ENCODE measurements at regions of chr17 and their contacts with region 1.

Region 1: GRCh38 chr17:59619293-59620063 is at the start of gene CLTC:
- DNase-seq: peak; percentile 83 to 98 (median 90)
- ATAC-seq: peak; percentile 82
- H3K4me3 ChIP-seq: peak within 1 kb of the TSS; percentile 98 to 99
- H3K4me3 Mint-ChIP-seq: peak within 1 kb of the TSS; percentile 96
- H3K27ac ChIP-seq: peak within 1 kb of the TSS; percentile 91 to 99
- H3K27ac Mint-ChIP-seq: peak within 1 kb of the TSS; percentile 98
- H3K4me1 ChIP-seq: peaks cover 37% of the 10 kb centered on the region
- H3K4me1 Mint-ChIP-seq: peaks cover 48% of the 10 kb centered on the region
- H3K27me3 ChIP-seq: no peaks in the 10 kb centered on the region
- H3K27me3 Mint-ChIP-seq: no peaks in the 10 kb centered on the region
- CTCF ChIP-seq: no peak
- total RNA-seq, gene CLTC: 73.4 to 86.0 TPM

Region 2: DNA sequence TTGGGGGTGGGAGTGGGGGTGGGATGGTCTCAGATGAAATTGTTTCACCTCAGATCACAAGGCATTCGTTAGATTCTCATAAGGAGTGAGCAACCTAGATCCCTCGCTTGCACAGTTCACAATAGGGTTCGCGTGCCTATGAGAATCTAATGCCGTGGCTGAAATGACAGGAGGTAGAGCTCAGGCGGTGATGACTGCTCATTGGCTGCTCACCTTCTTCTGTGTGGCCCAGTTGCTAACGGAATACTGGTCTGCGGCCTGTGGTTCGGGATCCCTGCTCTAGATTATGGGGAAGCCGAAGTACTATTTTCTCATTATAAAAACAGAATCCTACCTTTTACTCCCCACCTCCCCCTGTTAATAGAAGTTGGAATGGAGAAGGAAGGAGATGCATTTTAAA is 19.1 kb after region 1 on chr17:
- CTCF ChIA-PET with region 1: interaction called, 3 read pairs
- POLR2A ChIA-PET with region 1: interaction called, 4 read pairs
- intact Hi-C with region 1: loop called in 1 of 2 experiments (anchors 2 kb)
- DNase-seq: no peak
- ATAC-seq: no peak
- H3K4me3 ChIP-seq: no peak overlapping the region
- H3K4me3 Mint-ChIP-seq: no peak overlapping the region
- H3K27ac ChIP-seq: no peak overlapping the region
- H3K27ac Mint-ChIP-seq: no peak overlapping the region
- H3K4me1 ChIP-seq: peaks cover 48% of the 10 kb centered on the region
- H3K4me1 Mint-ChIP-seq: peaks cover 75% of the 10 kb centered on the region
- H3K27me3 ChIP-seq: no peaks in the 10 kb centered on the region
- H3K27me3 Mint-ChIP-seq: no peaks in the 10 kb centered on the region
- CTCF ChIP-seq: no peak

Region 3: DNA sequence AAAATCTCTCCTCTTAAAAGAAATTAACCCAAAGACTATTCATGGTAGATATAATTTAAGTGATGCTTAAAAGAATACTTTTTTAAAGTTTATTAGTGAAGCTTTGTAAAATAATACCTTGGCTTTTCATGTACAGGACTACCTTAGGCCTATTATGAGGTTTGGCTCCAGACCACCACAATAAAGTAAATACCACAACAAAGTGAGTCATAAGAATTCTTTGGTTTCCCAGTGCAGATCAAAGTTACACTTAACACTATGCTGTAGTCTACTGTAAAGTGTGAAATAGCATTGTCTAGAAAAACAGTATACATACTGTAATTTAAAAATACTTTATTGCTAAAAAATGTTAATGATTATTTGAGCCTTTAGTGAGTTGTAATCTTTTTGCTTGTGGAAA is 31.9 kb after region 1 on chr17:
- CTCF ChIA-PET with region 1: no interaction called
- POLR2A ChIA-PET with region 1: interaction called, 4 read pairs
- intact Hi-C with region 1: loop called in 1 of 2 experiments (anchors 5 kb)
- DNase-seq: peak in 2 of 9 experiments; percentile 45 to 63
- ATAC-seq: peak; percentile 76
- H3K4me3 ChIP-seq: no peak overlapping the region
- H3K4me3 Mint-ChIP-seq: no peak overlapping the region
- H3K27ac ChIP-seq: no peak overlapping the region
- H3K27ac Mint-ChIP-seq: no peak overlapping the region
- H3K4me1 ChIP-seq: peaks cover 12% of the 10 kb centered on the region
- H3K4me1 Mint-ChIP-seq: peaks cover 24% of the 10 kb centered on the region
- H3K27me3 ChIP-seq: no peaks in the 10 kb centered on the region
- H3K27me3 Mint-ChIP-seq: no peaks in the 10 kb centered on the region
- CTCF ChIP-seq: no peak

Measured in CD8-positive, alpha-beta T cell (primary cell).